Activated T-helper 2 cell treated with anti-CD3 and anti-CD28 coated beads, Interferon-gamma antibody, Interleukin-2, Interleukin-4, amounts not matched to agents 10 μg/mL and 5 μg/mL and 100 μg/mL, durations not matched to agents 14 hours and 24 hours and 36 hours (primary cell): ENCODE measurements at regions of chr10 and their contacts with region 1.

Region 1: DNA sequence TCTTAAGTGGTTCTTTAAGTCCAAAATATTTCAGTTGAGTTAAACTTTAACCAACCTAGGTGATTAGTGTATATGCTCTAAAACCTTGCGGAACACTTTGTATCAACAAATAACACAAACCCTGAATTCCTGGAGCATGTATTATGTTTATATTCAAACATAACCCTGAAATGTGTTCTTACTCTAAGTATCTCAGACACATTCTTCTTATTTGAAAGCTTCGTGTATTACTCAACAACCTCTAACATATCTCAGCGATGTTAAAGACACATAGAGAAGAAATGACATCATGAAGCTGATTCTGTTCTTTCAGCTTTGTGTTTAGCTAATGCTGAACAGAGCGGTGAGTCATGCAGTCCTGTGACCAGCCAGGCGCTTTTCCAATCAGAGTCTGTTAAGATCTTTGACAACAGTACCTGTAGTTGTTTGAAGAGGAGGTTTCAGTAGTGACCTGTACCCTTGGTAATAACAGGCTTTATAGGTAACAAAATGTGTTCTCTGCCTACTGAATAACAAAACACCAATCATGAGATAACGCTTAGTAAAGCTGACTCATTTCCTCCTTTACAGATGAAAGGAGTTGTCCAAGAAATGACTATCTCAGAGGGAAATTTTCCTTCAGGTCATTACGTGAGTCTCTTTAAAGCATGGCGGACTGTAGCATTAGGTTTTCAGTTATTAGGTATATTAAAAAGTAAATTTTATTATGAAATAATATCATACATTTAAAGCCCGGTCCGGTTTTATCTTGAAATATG is 67.3 kb upstream of the KLF6 start:
- DNase-seq: peak; percentile 59
- H3K4me3 Mint-ChIP-seq: peak overlapping the region; percentile 9
- H3K27ac Mint-ChIP-seq: peak overlapping the region; percentile 79
- H3K4me1 Mint-ChIP-seq: peaks cover 42% of the 10 kb centered on the region
- H3K27me3 Mint-ChIP-seq: no peaks in the 10 kb centered on the region

Region 2: DNA sequence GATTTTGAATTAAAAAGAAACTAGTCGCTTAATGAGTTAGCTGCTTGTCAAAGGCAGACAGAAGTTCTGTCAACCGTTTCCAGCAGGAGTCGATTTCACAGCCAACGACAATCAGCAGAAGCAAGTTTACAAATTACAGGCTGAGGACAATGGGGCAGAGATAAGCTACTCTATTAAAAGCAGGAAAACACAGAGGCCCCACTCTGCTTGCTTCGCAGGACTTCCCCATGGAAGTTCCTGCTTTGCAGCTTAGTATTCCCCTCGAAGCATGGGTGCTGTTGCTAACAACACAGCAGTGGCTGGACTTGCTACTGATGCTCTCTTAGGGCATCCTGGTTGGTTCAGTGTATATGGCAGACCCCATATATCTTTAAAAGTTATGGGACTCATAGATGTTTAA is 16.6 kb before region 1 on chr10:
- intact Hi-C with region 1: loop called (anchors 2 kb)
- DNase-seq: no peak
- H3K4me3 Mint-ChIP-seq: no peak overlapping the region
- H3K27ac Mint-ChIP-seq: peak overlapping the region; percentile 84
- H3K4me1 Mint-ChIP-seq: peaks cover 56% of the 10 kb centered on the region
- H3K27me3 Mint-ChIP-seq: no peaks in the 10 kb centered on the region

Region 3: DNA sequence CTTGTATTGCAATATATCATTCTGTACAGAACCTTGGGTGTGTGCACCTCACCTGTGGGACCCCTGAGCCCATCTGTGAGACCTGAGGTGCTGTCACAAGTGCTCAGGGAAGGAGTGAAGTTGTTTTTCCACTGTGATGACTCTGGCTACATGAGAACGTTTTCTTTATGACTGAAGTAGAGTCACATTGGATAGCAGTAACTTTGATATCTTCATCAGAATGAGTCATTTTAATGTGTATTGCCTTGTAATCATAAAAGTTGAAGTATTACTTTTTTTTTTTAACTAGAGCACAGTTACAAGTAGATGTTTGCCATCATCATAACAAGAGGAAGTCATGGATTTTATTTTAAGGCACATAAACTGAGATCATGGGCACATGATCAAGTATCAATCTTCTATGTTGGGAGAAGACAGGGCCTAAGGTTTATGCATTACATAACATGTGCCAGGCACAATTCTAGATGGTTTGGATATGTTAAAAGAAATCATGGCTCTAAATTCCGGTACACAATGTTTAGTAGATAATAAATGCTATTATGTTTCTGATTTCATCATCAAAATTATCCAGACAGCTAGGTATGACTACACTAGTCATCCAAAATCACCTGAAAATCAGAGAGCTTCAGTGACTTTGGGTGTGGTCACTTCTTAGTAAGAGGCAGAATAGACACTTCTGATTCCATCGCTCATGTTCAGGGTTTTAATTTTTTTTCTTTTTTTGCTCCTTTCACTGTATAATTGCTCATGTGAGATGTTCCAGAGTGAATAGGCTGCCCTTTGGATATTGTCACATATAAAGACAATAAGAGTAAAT is 15.3 kb after region 1 on chr10:
- intact Hi-C with region 1: loop called (anchors 1 kb)
- DNase-seq: no peak
- H3K4me3 Mint-ChIP-seq: no peak overlapping the region
- H3K27ac Mint-ChIP-seq: peak overlapping the region; percentile 88
- H3K4me1 Mint-ChIP-seq: peaks cover 60% of the 10 kb centered on the region
- H3K27me3 Mint-ChIP-seq: no peaks in the 10 kb centered on the region